Caco-2 (cell line): ENCODE measurements at regions of chr2 and their contacts with region 1.

Region 1: DNA sequence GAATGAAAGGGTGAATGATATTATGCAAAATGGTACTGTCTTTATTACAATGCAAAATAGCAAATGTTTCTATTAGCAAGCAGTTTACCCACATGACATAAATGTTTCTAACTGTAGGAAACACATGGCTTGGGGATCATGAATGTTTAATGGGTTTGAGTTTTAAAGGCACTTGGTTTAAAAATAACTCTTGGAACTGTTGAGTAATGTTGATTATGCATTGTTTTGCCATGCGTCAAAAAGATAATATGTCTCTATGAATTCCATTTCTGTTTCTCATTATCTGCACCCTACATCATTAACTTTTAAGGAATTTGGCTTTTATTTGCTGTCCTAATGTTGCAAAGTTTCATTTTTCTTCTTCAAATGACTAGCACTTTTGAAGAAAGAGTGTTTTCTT is 1355.5 kb downstream of the SUCLG1 start:
- DNase-seq: no peak
- H3K4me3 ChIP-seq: no peak overlapping the region
- H3K4me3 Mint-ChIP-seq: peak overlapping the region; percentile 19
- H3K27ac Mint-ChIP-seq: peak overlapping the region; percentile 75
- H3K4me1 ChIP-seq: peaks cover 21% of the 10 kb centered on the region
- H3K4me1 Mint-ChIP-seq: peaks cover 14% of the 10 kb centered on the region
- H3K27me3 ChIP-seq: no peaks in the 10 kb centered on the region
- H3K27me3 Mint-ChIP-seq: no peaks in the 10 kb centered on the region
- CTCF ChIP-seq: no peak

Region 2: GRCh38 chr2:82993637-82994036 is 110.0 kb before region 1 on chr2:
- CTCF ChIA-PET with region 1: no interaction called
- POLR2A ChIA-PET with region 1: no interaction called
- intact Hi-C with region 1: loop called (anchors 10 kb)
- DNase-seq: peak in 1 of 2 experiments; percentile 46
- H3K4me3 ChIP-seq: no peak overlapping the region
- H3K4me3 Mint-ChIP-seq: no peak overlapping the region
- H3K27ac Mint-ChIP-seq: no peak overlapping the region
- H3K4me1 ChIP-seq: peaks cover 15% of the 10 kb centered on the region
- H3K4me1 Mint-ChIP-seq: peaks cover 14% of the 10 kb centered on the region
- H3K27me3 ChIP-seq: no peaks in the 10 kb centered on the region
- H3K27me3 Mint-ChIP-seq: no peaks in the 10 kb centered on the region
- CTCF ChIP-seq: no peak

Region 3: GRCh38 chr2:83071914-83072313 is 31.7 kb before region 1 on chr2:
- CTCF ChIA-PET with region 1: no interaction called
- POLR2A ChIA-PET with region 1: no interaction called
- intact Hi-C with region 1: loop called (anchors 1 kb)
- DNase-seq: peak in 1 of 2 experiments; percentile 10
- H3K4me3 ChIP-seq: no peak overlapping the region
- H3K4me3 Mint-ChIP-seq: no peak overlapping the region
- H3K27ac Mint-ChIP-seq: no peak overlapping the region
- H3K4me1 ChIP-seq: peaks cover 46% of the 10 kb centered on the region
- H3K4me1 Mint-ChIP-seq: peaks cover 16% of the 10 kb centered on the region
- H3K27me3 ChIP-seq: no peaks in the 10 kb centered on the region
- H3K27me3 Mint-ChIP-seq: no peaks in the 10 kb centered on the region
- CTCF ChIP-seq: no peak

Region 4: GRCh38 chr2:83081826-83082690 is 21.5 kb before region 1 on chr2:
- CTCF ChIA-PET with region 1: no interaction called
- POLR2A ChIA-PET with region 1: no interaction called
- intact Hi-C with region 1: no loop called
- DNase-seq: no peak
- H3K4me3 ChIP-seq: no peak overlapping the region
- H3K4me3 Mint-ChIP-seq: no peak overlapping the region
- H3K27ac Mint-ChIP-seq: peak overlapping the region; percentile 48
- H3K4me1 ChIP-seq: peaks cover 4% of the 10 kb centered on the region; the same call in 1 of the 2 replicates
- H3K4me1 Mint-ChIP-seq: peaks cover 7% of the 10 kb centered on the region
- H3K27me3 ChIP-seq: no peaks in the 10 kb centered on the region
- H3K27me3 Mint-ChIP-seq: no peaks in the 10 kb centered on the region
- CTCF ChIP-seq: no peak